GM18951 (cell line): ENCODE measurements at regions of chr4 and their contacts with region 1.

Region 1: DNA sequence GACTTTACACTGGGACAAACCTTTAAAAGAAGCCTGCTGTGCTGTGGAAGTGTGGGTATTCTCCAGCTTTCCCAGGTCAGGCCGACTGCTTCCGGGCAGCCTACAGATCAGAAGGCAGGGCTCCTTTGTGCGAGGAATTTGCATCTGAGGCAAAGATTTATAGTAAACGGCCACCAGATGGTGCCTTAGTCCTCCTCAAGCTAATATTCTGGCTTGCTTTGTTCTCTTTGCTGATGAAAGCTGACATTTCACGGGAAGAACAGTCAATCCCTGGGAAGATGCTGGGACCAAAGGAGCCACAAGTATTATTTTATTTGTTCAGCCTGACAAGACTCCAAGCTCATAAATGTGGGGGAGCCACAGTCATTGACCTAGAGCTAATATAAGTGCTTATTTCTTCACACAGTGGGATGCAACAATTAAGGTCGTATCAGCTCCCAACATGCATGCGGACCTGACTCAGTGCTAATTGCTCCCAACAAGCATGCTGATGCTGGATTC is 120.7 kb upstream of the TRIM2 start:
- POLR2A ChIP-seq: no peak

Region 2: GRCh38 chr4:152843481-152844090 is 239.9 kb before region 1 on chr4:
- in situ Hi-C with region 1: loop called (anchors 25 kb)
- POLR2A ChIP-seq: no peak

Region 3: DNA sequence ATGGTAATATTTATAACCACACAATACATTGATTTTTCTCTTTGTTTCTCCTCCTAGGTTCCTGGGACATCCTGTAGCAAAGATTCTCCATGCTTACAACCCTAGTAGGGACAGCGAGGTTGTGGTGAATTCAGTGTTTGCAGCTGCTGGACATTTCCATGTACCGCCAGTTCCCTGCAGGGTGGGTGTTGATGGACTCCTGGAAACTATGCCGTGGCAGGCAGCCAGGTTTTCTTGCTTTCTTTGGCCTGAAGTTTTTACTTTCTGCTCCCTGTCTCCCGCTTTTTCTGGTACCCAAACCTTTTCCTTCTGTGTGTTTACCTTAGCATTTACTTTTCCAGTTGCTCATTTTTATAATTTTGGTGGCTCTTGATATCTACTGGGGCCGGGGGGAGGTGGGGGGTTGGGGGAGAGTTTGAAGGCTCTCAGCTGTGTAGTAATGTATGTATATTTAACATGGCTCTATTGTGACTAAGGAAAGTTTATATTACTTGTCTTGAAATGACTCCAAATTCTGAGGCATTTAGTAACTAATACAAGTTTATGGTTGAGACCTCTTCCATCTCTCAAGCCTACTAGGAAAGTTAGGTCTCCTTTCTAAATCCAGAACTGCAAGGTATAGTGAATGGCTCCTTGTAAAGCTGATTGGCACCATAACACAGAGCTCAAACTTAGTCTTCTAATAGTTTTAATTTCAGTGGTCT is 472.4 kb after region 1 on chr4:
- in situ Hi-C with region 1: no loop called
- POLR2A ChIP-seq: no peak